Keratinocyte (primary cell): ENCODE measurements at regions of chr19 and their contacts with region 1.

Region 1: DNA sequence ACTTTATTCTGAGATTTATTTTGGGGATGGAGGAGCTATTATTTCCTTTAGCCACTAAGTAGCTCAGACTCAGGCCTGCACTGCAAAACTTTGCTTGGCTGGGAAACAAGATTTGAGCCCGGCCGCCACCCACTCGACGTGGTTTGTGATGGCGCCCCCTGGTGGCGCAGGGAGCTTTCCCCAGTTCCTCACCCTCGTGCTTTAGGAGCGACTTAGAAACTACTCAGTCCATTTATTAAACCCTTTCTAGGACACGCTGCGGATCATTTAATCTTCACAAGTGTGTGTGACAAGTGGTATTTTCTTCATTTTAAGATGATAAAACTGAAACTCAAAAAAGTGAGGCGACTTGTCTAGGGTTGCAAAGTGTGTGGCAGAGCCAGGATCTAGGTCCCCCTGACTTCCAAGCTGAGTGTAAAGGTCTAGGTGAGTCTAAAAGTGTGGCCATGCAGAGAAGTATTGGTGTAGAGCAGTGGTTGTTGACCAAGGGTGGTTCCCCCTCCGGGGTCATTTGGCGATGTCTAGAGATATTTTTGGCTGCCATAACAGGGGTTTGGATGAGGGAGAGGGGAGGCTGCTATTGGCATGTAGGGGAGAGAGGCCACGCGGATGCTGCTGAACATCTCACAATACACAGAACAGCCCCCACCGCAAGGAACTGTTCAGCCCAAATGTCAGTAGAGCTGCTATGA is 2.2 kb downstream of the CXCL17 start:
- DNase-seq: no peak
- H3K4me3 ChIP-seq: no peak overlapping the region
- H3K27ac ChIP-seq: no peak overlapping the region
- H3K4me1 ChIP-seq: no peaks in the 10 kb centered on the region
- H3K27me3 ChIP-seq: no peaks in the 10 kb centered on the region
- CTCF ChIP-seq: peak; percentile 83 to 95 (median 93)

Region 2: DNA sequence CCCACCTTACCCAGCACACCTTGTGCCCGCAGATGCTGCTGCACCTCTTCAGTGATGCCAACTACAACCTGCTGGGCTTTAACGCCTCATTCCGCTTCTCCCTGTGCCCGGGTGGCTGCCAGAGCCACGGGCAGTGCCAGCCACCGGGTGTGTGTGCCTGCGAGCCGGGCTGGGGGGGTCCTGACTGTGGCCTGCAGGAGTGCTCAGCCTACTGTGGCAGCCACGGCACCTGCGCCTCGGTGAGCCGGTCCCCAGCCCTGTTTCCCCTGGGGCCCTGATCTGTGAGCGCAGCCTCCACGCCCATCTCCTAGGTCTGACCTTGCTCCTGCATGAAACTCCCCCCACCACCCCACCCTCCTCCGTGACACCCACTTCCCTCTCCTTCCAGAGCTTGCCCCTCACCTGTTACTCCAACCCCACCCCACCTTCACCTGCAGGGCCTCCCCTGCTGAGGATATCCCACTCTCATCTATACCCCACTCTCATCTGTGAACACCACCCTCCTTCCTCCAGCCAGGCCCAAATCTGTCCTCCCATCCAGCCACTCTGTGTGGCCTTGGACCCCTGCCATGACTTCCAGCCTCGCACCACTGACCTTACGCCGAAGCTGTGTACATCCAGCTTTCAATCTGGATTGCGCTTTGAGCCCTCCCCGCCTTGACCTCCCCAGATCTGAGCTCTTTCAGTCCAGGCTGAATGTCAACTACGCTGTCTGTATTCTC is 106.4 kb before region 1 on chr19:
- dilution Hi-C with region 1: no loop called
- DNase-seq: no peak
- H3K4me3 ChIP-seq: no peak overlapping the region
- H3K27ac ChIP-seq: no peak overlapping the region
- H3K4me1 ChIP-seq: no peaks in the 10 kb centered on the region
- H3K27me3 ChIP-seq: no peaks in the 10 kb centered on the region
- CTCF ChIP-seq: no peak

Region 3: DNA sequence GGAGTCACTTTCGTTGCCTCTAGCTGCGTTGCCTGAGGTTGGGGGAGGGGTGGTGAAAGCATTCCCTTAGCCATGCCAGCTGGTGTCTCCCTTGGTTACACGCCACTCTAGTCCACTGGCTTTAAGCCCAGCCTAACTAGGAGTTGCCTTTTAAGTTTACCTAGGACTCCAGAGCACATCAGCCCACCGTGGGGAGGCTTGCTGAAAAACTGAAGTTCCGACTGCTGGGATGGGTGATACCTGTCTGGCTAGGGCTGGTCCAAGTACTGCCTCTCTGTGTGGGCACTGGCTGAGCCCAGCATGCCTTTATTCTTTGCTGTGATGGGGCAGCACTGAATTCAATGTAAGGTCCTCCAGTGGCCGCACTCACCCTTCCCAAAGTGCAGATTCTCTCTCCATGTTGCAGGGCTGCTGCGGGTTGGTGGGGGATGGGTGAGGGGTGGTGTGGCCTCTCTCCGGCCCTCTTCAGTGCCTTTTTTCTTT is 99.6 kb after region 1 on chr19:
- dilution Hi-C with region 1: no loop called
- DNase-seq: no peak
- H3K4me3 ChIP-seq: no peak overlapping the region
- H3K27ac ChIP-seq: no peak overlapping the region
- H3K4me1 ChIP-seq: no peaks in the 10 kb centered on the region
- H3K27me3 ChIP-seq: no peaks in the 10 kb centered on the region
- CTCF ChIP-seq: no peak

Region 4: GRCh38 chr19:42596391-42597072 is 156.0 kb after region 1 on chr19:
- dilution Hi-C with region 1: loop called (anchors 25 kb)
- DNase-seq: no peak
- H3K4me3 ChIP-seq: no peak overlapping the region
- H3K27ac ChIP-seq: no peak overlapping the region
- H3K4me1 ChIP-seq: no peaks in the 10 kb centered on the region
- H3K27me3 ChIP-seq: peaks cover 7% of the 10 kb centered on the region
- CTCF ChIP-seq: peak; percentile 92 to 98 (median 92)